MCF 10A (cell line): ENCODE measurements at regions of chr1 and their contacts with region 1.

Region 1: GRCh38 chr1:172745014-172745413 is 86.1 kb downstream of the FASLG start:
- DNase-seq: peak; percentile 91
- H3K4me3 Mint-ChIP-seq: peak overlapping the region; percentile 42
- H3K27ac Mint-ChIP-seq: peak overlapping the region; percentile 86
- H3K4me1 Mint-ChIP-seq: peaks cover 42% of the 10 kb centered on the region
- H3K27me3 Mint-ChIP-seq: no peaks in the 10 kb centered on the region
- CTCF ChIP-seq: peak; percentile 85

Region 2: DNA sequence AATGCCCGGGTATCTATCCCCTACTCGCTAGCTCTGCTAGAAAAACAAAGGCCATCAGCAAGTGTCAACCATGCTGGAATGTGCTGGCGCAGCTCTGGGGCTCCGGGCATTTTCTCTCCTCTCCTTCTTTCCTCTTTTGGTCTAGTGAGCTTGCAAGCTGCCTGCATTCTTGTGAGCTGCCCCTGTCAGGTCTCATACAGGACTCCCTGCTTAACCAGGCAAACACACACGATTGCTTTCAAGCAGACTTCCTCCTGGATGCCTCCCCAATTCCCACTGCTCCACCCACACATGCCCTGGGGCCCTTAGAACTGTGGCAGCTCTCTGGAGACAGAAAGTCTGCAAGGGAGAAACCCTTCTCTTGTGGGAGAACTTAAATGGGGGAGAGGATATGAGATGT is 247.8 kb before region 1 on chr1:
- CTCF ChIA-PET with region 1: no interaction called
- POLR2A ChIA-PET with region 1: no interaction called
- intact Hi-C with region 1: no loop called
- DNase-seq: peak; percentile 76
- H3K4me3 Mint-ChIP-seq: no peak overlapping the region
- H3K27ac Mint-ChIP-seq: no peak overlapping the region
- H3K4me1 Mint-ChIP-seq: peaks cover 12% of the 10 kb centered on the region
- H3K27me3 Mint-ChIP-seq: no peaks in the 10 kb centered on the region
- CTCF ChIP-seq: no peak

Region 3: GRCh38 chr1:172761581-172762025 is 16.6 kb after region 1 on chr1:
- CTCF ChIA-PET with region 1: interaction called, 101 read pairs
- POLR2A ChIA-PET with region 1: no interaction called
- intact Hi-C with region 1: no loop called
- DNase-seq: peak; percentile 71
- H3K4me3 Mint-ChIP-seq: no peak overlapping the region
- H3K27ac Mint-ChIP-seq: peak overlapping the region; percentile 63
- H3K4me1 Mint-ChIP-seq: peaks cover 26% of the 10 kb centered on the region
- H3K27me3 Mint-ChIP-seq: no peaks in the 10 kb centered on the region
- CTCF ChIP-seq: no peak

Region 4: DNA sequence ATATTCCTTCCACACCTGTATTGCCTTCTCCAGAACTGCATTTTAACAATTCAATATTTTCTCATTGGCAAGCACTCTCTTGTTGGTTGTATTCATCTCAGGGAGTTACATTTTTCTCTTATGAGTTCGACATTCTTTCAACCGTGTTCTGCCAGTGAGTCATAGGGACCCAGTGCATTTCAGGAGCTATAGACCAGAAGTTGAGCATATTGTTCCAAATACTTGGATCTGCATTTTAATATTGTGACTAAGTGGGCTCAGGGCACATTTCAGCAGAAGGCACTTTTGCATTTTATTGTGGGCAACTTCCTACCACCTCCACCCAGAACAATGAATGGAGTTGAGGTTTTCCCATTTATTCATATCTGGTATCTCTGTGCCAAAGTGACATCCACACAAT is 173.0 kb after region 1 on chr1:
- CTCF ChIA-PET with region 1: interaction called, 7 read pairs
- POLR2A ChIA-PET with region 1: no interaction called
- intact Hi-C with region 1: loop called (anchors 5 kb)
- DNase-seq: peak; percentile 93
- H3K4me3 Mint-ChIP-seq: no peak overlapping the region
- H3K27ac Mint-ChIP-seq: no peak overlapping the region
- H3K4me1 Mint-ChIP-seq: peaks cover 30% of the 10 kb centered on the region
- H3K27me3 Mint-ChIP-seq: no peaks in the 10 kb centered on the region
- CTCF ChIP-seq: no peak

Region 5: GRCh38 chr1:173175514-173176145 is 430.6 kb after region 1 on chr1:
- CTCF ChIA-PET with region 1: interaction called, 11 read pairs
- POLR2A ChIA-PET with region 1: no interaction called
- intact Hi-C with region 1: no loop called
- DNase-seq: peak; percentile 11
- H3K4me3 Mint-ChIP-seq: no peak overlapping the region
- H3K27ac Mint-ChIP-seq: peak overlapping the region; percentile 11
- H3K4me1 Mint-ChIP-seq: no peaks in the 10 kb centered on the region
- H3K27me3 Mint-ChIP-seq: no peaks in the 10 kb centered on the region
- CTCF ChIP-seq: no peak

Region 6: GRCh38 chr1:173420330-173420806 is 675.4 kb after region 1 on chr1:
- CTCF ChIA-PET with region 1: interaction called, 74 read pairs
- POLR2A ChIA-PET with region 1: no interaction called
- intact Hi-C with region 1: loop called (anchors 1 kb)
- DNase-seq: peak; percentile 91
- H3K4me3 Mint-ChIP-seq: no peak overlapping the region
- H3K27ac Mint-ChIP-seq: peak overlapping the region; percentile 9
- H3K4me1 Mint-ChIP-seq: peaks cover 22% of the 10 kb centered on the region
- H3K27me3 Mint-ChIP-seq: no peaks in the 10 kb centered on the region
- CTCF ChIP-seq: peak; percentile 94

Region 7: DNA sequence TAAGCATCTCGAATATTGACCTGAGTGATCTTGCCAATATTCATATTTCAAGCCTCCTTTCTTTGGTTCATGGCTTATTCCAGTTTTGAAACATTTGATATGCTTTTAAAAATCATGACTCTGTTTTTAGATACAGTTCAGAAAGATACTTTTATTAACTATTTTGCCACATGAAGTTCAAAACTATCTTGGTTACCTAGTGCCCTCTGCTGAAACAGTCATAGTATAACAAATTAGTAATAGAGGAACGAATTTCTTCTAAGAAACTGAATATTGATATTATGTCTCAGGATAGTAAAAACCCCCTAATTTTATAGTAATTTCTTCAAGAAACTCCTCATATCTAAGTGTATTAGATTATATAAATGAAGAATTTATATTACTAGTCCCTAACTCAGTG is 1329.7 kb after region 1 on chr1:
- CTCF ChIA-PET with region 1: interaction called, 3 read pairs
- POLR2A ChIA-PET with region 1: no interaction called
- intact Hi-C with region 1: loop called (anchors 1 kb)
- DNase-seq: peak; percentile 52
- H3K4me3 Mint-ChIP-seq: no peak overlapping the region
- H3K27ac Mint-ChIP-seq: no peak overlapping the region
- H3K4me1 Mint-ChIP-seq: no peaks in the 10 kb centered on the region
- H3K27me3 Mint-ChIP-seq: peaks cover 16% of the 10 kb centered on the region
- CTCF ChIP-seq: peak; percentile 68